Naive thymus-derived CD4-positive, alpha-beta T cell (primary cell): ENCODE measurements at regions of chr22 and their contacts with region 1.

Region 1: GRCh38 chr22:29766632-29767170 is at the start of gene ZMAT5:
- DNase-seq: peak; percentile 68 to 96 (median 93)
- ATAC-seq: peak; percentile 98
- H3K4me3 ChIP-seq: peak within 1 kb of the TSS; percentile 84
- H3K4me3 Mint-ChIP-seq: peak within 1 kb of the TSS; percentile 95 to 100 (median 99)
- H3K27ac ChIP-seq: peak within 1 kb of the TSS; percentile 88
- H3K27ac Mint-ChIP-seq: peak within 1 kb of the TSS; percentile 92 to 99 (median 97)
- H3K4me1 ChIP-seq: peaks cover 16 to 17% of the 10 kb centered on the region in 2 donors
- H3K4me1 Mint-ChIP-seq: peaks cover 21 to 59% (median 39%) of the 10 kb centered on the region in 7 donors
- H3K27me3 ChIP-seq: no peaks in the 10 kb centered on the region
- H3K27me3 Mint-ChIP-seq: no peaks in the 10 kb centered on the region
- total RNA-seq, gene ZMAT5: 12.9 to 26.4 (median 14.7) TPM

Region 2: GRCh38 chr22:29267858-29268417 is 498.8 kb before region 1 on chr22 and contains the starts of genes EWSR1 and RHBDD3:
- CTCF ChIA-PET with region 1: no interaction called
- POLR2A ChIA-PET with region 1: no interaction called
- intact Hi-C with region 1: loop called in 1 of 2 experiments (anchors 5 kb)
- DNase-seq: peak; percentile 90 to 100 (median 97)
- ATAC-seq: peak; percentile 94
- H3K4me3 ChIP-seq: peak within 1 kb of the TSS; percentile 96
- H3K4me3 Mint-ChIP-seq: peak within 1 kb of the TSS; percentile 93 to 100 (median 96)
- H3K27ac ChIP-seq: peak within 1 kb of the TSS; percentile 98
- H3K27ac Mint-ChIP-seq: peak within 1 kb of the TSS; percentile 97 to 100 (median 99)
- H3K4me1 ChIP-seq: peaks cover 39 to 41% of the 10 kb centered on the region in 2 donors
- H3K4me1 Mint-ChIP-seq: peaks cover 44 to 59% (median 54%) of the 10 kb centered on the region in 7 donors
- H3K27me3 ChIP-seq: no peaks in the 10 kb centered on the region
- H3K27me3 Mint-ChIP-seq: peaks cover 0 to 5% (median 0%) of the 10 kb centered on the region in 5 donors
- total RNA-seq, gene EWSR1: 249 to 366 (median 273) TPM
- total RNA-seq, gene RHBDD3: 10.8 to 39.4 (median 14.7) TPM

Region 3: DNA sequence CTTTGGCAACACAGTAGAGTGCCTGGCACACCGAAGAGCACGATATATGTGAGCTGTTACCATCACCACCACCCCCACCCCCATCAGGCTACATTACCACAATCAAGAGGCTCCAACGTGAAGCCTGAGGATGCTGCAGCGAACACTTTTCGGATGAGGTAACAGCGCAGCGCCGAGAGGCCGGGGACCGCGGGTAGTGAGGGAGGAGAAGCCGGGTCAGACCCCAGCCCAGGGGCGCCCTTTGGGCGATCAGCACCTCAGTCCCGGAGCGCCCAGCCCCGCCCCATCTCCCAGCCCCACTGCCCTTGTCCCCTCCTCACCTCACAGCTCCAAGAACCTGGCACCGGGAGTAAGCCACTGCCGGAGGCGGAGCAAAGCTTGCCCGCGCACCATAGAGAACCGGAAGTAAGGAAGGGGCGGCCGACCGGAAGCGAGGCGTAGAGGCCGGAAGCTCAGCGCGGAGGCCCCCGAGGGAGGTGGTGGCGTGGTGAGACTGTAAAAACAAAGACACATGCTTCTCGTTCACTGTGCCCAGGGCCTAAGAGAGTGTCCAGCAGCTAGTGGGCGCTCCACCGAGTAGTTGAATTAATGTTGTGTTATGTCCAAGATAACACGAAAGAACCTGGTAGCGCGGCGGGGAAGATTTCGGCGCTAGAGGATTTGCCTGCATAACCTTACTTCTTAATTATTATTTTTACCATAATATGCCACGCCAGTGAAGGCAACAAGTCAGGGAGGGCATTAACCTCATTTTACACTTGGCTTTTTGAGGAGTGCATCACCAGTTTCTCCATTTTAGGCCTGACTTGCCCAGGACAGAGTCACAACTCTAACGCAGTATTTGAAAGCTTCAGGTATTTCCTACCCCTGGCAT is 213.1 kb before region 1 on chr22 and contains the start of gene THOC5:
- CTCF ChIA-PET with region 1: no interaction called
- POLR2A ChIA-PET with region 1: interaction called, 7 read pairs
- intact Hi-C with region 1: loop called in 1 of 2 experiments (anchors 2 kb)
- DNase-seq: peak; percentile 74 to 90 (median 88)
- ATAC-seq: peak; percentile 97
- H3K4me3 ChIP-seq: peak within 1 kb of the TSS; percentile 96
- H3K4me3 Mint-ChIP-seq: peak within 1 kb of the TSS; percentile 84 to 99 (median 94)
- H3K27ac ChIP-seq: peak within 1 kb of the TSS; percentile 84
- H3K27ac Mint-ChIP-seq: peak within 1 kb of the TSS; percentile 94 to 99 (median 98)
- H3K4me1 ChIP-seq: peaks cover 4 to 7% of the 10 kb centered on the region in 2 donors
- H3K4me1 Mint-ChIP-seq: peaks cover 12 to 36% (median 29%) of the 10 kb centered on the region in 7 donors
- H3K27me3 ChIP-seq: no peaks in the 10 kb centered on the region
- H3K27me3 Mint-ChIP-seq: no peaks in the 10 kb centered on the region
- total RNA-seq, gene THOC5: 45.7 to 61.9 (median 57.1) TPM

Region 4: GRCh38 chr22:29837780-29838598 is 71.3 kb after region 1 on chr22 and contains the start of gene ASCC2:
- CTCF ChIA-PET with region 1: no interaction called
- POLR2A ChIA-PET with region 1: interaction called, 4 read pairs
- intact Hi-C with region 1: loop called (anchors 1 kb)
- DNase-seq: peak; percentile 93 to 98 (median 97)
- ATAC-seq: peak; percentile 100
- H3K4me3 ChIP-seq: peak within 1 kb of the TSS; percentile 98
- H3K4me3 Mint-ChIP-seq: peak within 1 kb of the TSS; percentile 89 to 99 (median 95)
- H3K27ac ChIP-seq: peak within 1 kb of the TSS; percentile 79
- H3K27ac Mint-ChIP-seq: peak within 1 kb of the TSS; percentile 94 to 99 (median 95)
- H3K4me1 ChIP-seq: peaks cover 12 to 22% of the 10 kb centered on the region in 2 donors
- H3K4me1 Mint-ChIP-seq: peaks cover 31 to 55% (median 45%) of the 10 kb centered on the region in 7 donors
- H3K27me3 ChIP-seq: no peaks in the 10 kb centered on the region
- H3K27me3 Mint-ChIP-seq: no peaks in the 10 kb centered on the region
- total RNA-seq, gene ASCC2: 90.2 to 101 (median 93.8) TPM

Region 5: GRCh38 chr22:30253205-30253852 is 486.6 kb after region 1 on chr22:
- CTCF ChIA-PET with region 1: no interaction called
- POLR2A ChIA-PET with region 1: no interaction called
- intact Hi-C with region 1: loop called in 1 of 2 experiments (anchors 2 kb)
- DNase-seq: no peak
- ATAC-seq: no peak
- H3K4me3 ChIP-seq: no peak overlapping the region
- H3K4me3 Mint-ChIP-seq: peak overlapping the region in 1 of 10 donors; percentile 71
- H3K27ac ChIP-seq: no peak overlapping the region
- H3K27ac Mint-ChIP-seq: peak overlapping the region in 1 of 9 donors; percentile 64
- H3K4me1 ChIP-seq: no peaks in the 10 kb centered on the region
- H3K4me1 Mint-ChIP-seq: peaks cover 5 to 51% (median 14%) of the 10 kb centered on the region in 7 donors
- H3K27me3 ChIP-seq: no peaks in the 10 kb centered on the region
- H3K27me3 Mint-ChIP-seq: peaks cover 0 to 5% (median 3%) of the 10 kb centered on the region in 5 donors

Region 6: GRCh38 chr22:31661851-31662656 is 1895.4 kb after region 1 on chr22 and contains the start of gene PISD:
- CTCF ChIA-PET with region 1: no interaction called
- POLR2A ChIA-PET with region 1: no interaction called
- intact Hi-C with region 1: loop called in 1 of 2 experiments (anchors 2 kb)
- DNase-seq: peak; percentile 93 to 98 (median 97)
- ATAC-seq: peak; percentile 99
- H3K4me3 ChIP-seq: peak within 1 kb of the TSS; percentile 93
- H3K4me3 Mint-ChIP-seq: peak within 1 kb of the TSS; percentile 90 to 100 (median 98)
- H3K27ac ChIP-seq: peak within 1 kb of the TSS; percentile 78
- H3K27ac Mint-ChIP-seq: peak within 1 kb of the TSS; percentile 90 to 100 (median 95)
- H3K4me1 ChIP-seq: peaks cover 10 to 18% of the 10 kb centered on the region in 2 donors
- H3K4me1 Mint-ChIP-seq: peaks cover 22 to 47% (median 39%) of the 10 kb centered on the region in 7 donors
- H3K27me3 ChIP-seq: no peaks in the 10 kb centered on the region
- H3K27me3 Mint-ChIP-seq: no peaks in the 10 kb centered on the region
- total RNA-seq, gene PISD: 29.7 to 47.8 (median 35.5) TPM